PC-9 (cell line): ENCODE measurements at regions of chr10 and their contacts with region 1.

Region 1: GRCh38 chr10:59991661-59992060 is 85.3 kb upstream of the CCDC6 start:
- DNase-seq: peak; percentile 84 to 98
- H3K4me3 ChIP-seq: peak overlapping the region; percentile 38; the same call in 1 of the 2 replicates
- H3K27ac ChIP-seq: peak overlapping the region; percentile 91
- H3K4me1 ChIP-seq: peaks cover 37% of the 10 kb centered on the region
- H3K27me3 ChIP-seq: no peaks in the 10 kb centered on the region
- CTCF ChIP-seq: no peak

Region 2: DNA sequence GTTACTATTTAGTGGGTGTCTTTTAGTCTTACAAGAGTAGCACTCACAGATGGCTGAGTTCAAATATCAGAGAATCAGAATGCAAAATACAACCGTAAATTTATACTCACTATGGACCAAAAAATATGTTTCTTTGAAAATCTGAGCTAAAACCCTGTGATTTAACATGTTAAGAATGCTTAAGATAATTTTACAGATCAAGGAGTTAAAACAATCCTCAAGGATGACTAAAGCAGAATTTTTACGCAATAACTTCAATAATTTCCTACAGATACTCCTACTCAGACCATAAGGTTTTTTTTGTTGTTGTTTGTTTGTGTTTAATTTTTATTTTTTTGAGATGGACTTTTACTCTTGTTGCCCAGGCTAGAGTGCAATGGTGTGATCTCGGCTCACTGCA is 37.4 kb before region 1 on chr10:
- CTCF ChIA-PET with region 1: no interaction called
- POLR2A ChIA-PET with region 1: no interaction called
- intact Hi-C with region 1: no loop called
- DNase-seq: peak in 1 of 2 experiments; percentile 44
- H3K4me3 ChIP-seq: no peak overlapping the region
- H3K27ac ChIP-seq: peak overlapping the region; percentile 4
- H3K4me1 ChIP-seq: peaks cover 22% of the 10 kb centered on the region; the same call in 1 of the 2 replicates
- H3K27me3 ChIP-seq: no peaks in the 10 kb centered on the region
- CTCF ChIP-seq: no peak

Region 3: GRCh38 chr10:59965976-59966650 is 25.5 kb before region 1 on chr10:
- CTCF ChIA-PET with region 1: no interaction called
- POLR2A ChIA-PET with region 1: interaction called, 7 read pairs
- intact Hi-C with region 1: loop called (anchors 1 kb)
- DNase-seq: no peak
- H3K4me3 ChIP-seq: no peak overlapping the region
- H3K27ac ChIP-seq: peak overlapping the region; percentile 42
- H3K4me1 ChIP-seq: peaks cover 64% of the 10 kb centered on the region
- H3K27me3 ChIP-seq: no peaks in the 10 kb centered on the region
- CTCF ChIP-seq: no peak